ENCODE measurements at regions of chr3 and their contacts with region 1.

Region 1: GRCh38 chr3:11438646-11439045 is 166.4 kb downstream of the ATG7 start:
- DNase-seq: no peak
- ATAC-seq: no peak
- H3K4me3 ChIP-seq: no peak overlapping the region
- H3K27ac ChIP-seq: no peak overlapping the region
- H3K4me1 ChIP-seq: peaks cover 2 to 3% of the 10 kb centered on the region in 2 donors
- H3K27me3 ChIP-seq: no peaks in the 10 kb centered on the region

Region 2: GRCh38 chr3:11391174-11391879 is 47.3 kb before region 1 on chr3:
- intact Hi-C with region 1: loop called in 1 of 2 experiments (anchors 2 kb)
- DNase-seq: no peak
- ATAC-seq: peak; percentile 28
- H3K4me3 ChIP-seq: no peak overlapping the region
- H3K27ac ChIP-seq: no peak overlapping the region
- H3K4me1 ChIP-seq: peaks cover 4% of the 10 kb centered on the region in 2 donors
- H3K27me3 ChIP-seq: no peaks in the 10 kb centered on the region